ENCODE measurements at regions of chr1 and their contacts with region 1.

Region 1: GRCh38 chr1:235843461-235843961 is 23.2 kb downstream of the LYST start:
- DNase-seq: peak in 1 of 35 experiments; percentile 54
- ATAC-seq: peak in 3 of 4 experiments; percentile 48 to 84 (median 54)
- H3K4me3 ChIP-seq: no peak overlapping the region
- H3K4me3 Mint-ChIP-seq: no peak overlapping the region
- H3K27ac ChIP-seq: no peak overlapping the region
- H3K27ac Mint-ChIP-seq: no peak overlapping the region
- H3K4me1 ChIP-seq: peaks cover 10 to 17% of the 10 kb centered on the region in 2 experiments
- H3K4me1 Mint-ChIP-seq: peaks cover 50 to 69% (median 59%) of the 10 kb centered on the region in 3 donors
- H3K27me3 ChIP-seq: no peaks in the 10 kb centered on the region
- H3K27me3 Mint-ChIP-seq: no peaks in the 10 kb centered on the region

Region 2: GRCh38 chr1:235215453-235215852 is 628.1 kb before region 1 on chr1:
- CTCF ChIA-PET with region 1: no interaction called
- POLR2A ChIA-PET with region 1: no interaction called
- DNase-seq: no peak
- ATAC-seq: no peak
- H3K4me3 ChIP-seq: no peak overlapping the region
- H3K4me3 Mint-ChIP-seq: no peak overlapping the region
- H3K27ac ChIP-seq: no peak overlapping the region
- H3K27ac Mint-ChIP-seq: peak overlapping the region; percentile 77 to 79
- H3K4me1 ChIP-seq: no peaks in the 10 kb centered on the region
- H3K4me1 Mint-ChIP-seq: peaks cover 7 to 29% (median 10%) of the 10 kb centered on the region in 3 donors
- H3K27me3 ChIP-seq: no peaks in the 10 kb centered on the region
- H3K27me3 Mint-ChIP-seq: no peaks in the 10 kb centered on the region

Region 3: GRCh38 chr1:235866913-235867845 is 23.7 kb after region 1 on chr1:
- CTCF ChIA-PET with region 1: interaction called, 9 to 11 read pairs
- POLR2A ChIA-PET with region 1: interaction called, 8 to 9 read pairs
- DNase-seq: peak; percentile 90 to 100 (median 97)
- ATAC-seq: peak; percentile 74 to 89 (median 84)
- H3K4me3 ChIP-seq: peak overlapping the region; percentile 82
- H3K4me3 Mint-ChIP-seq: peak overlapping the region; percentile 84 to 99 (median 96)
- H3K27ac ChIP-seq: peak overlapping the region; percentile 98
- H3K27ac Mint-ChIP-seq: peak overlapping the region; percentile 92 to 97
- H3K4me1 ChIP-seq: peaks cover 6 to 46% of the 10 kb centered on the region in 2 experiments
- H3K4me1 Mint-ChIP-seq: peaks cover 47 to 64% (median 60%) of the 10 kb centered on the region in 3 donors
- H3K27me3 ChIP-seq: no peaks in the 10 kb centered on the region
- H3K27me3 Mint-ChIP-seq: no peaks in the 10 kb centered on the region

Region 4: GRCh38 chr1:235910357-235911299 is 67.1 kb after region 1 on chr1:
- CTCF ChIA-PET with region 1: no interaction called
- POLR2A ChIA-PET with region 1: no interaction called
- DNase-seq: no peak
- ATAC-seq: peak in 3 of 4 experiments; percentile 43 to 63 (median 54)
- H3K4me3 ChIP-seq: no peak overlapping the region
- H3K4me3 Mint-ChIP-seq: no peak overlapping the region
- H3K27ac ChIP-seq: no peak overlapping the region
- H3K27ac Mint-ChIP-seq: no peak overlapping the region
- H3K4me1 ChIP-seq: no peaks in the 10 kb centered on the region
- H3K4me1 Mint-ChIP-seq: peaks cover 6 to 8% (median 7%) of the 10 kb centered on the region in 3 donors
- H3K27me3 ChIP-seq: no peaks in the 10 kb centered on the region
- H3K27me3 Mint-ChIP-seq: no peaks in the 10 kb centered on the region

Measured in T-cell (primary cell).